ENCODE measurements at regions of chr14 and their contacts with region 1.

Region 1: DNA sequence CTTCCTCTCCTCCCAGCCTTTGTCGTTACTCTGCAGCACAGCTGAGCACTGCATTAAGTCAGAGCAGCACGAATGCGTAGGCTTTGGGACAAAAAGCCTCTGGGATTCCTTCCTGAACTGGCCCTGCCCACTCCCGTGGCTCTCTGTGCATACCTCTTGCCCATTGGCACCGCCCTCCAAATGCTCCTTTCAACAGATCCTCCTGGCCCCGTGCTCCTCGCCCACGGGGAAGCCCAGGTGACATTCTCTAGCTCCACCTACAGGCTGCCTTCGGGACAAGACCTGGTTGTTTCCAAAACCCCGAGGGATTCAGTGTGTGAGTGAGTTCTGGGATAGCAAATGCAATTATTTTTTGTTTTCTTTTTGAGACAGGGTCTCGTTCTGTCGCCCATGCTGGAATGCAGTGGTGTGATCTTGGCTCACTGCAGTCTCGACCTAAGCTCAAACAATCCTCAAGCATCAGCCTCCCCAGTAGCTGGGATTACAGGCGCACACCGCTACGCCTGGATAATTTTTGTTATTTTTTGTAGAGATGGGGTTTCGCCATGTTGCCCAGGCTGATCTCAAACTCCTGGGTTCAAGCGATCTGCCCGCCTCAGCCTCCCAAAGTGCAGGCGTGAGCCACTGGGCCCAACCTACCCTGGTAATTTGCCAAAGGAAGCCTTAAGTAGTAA is 17.9 kb upstream of the TDRD9 start:
- DNase-seq: peak; percentile 56 to 79 (median 64)
- H3K4me3 ChIP-seq: peak overlapping the region; percentile 36
- H3K4me3 Mint-ChIP-seq: peak overlapping the region; percentile 28 to 85 (median 82)
- H3K27ac ChIP-seq: no peak overlapping the region
- H3K27ac Mint-ChIP-seq: peak overlapping the region; percentile 22 to 89 (median 80)
- H3K4me1 ChIP-seq: peaks cover 22% of the 10 kb centered on the region
- H3K4me1 Mint-ChIP-seq: peaks cover 20 to 28% (median 23%) of the 10 kb centered on the region in 3 donors
- H3K27me3 ChIP-seq: no peaks in the 10 kb centered on the region
- H3K27me3 Mint-ChIP-seq: no peaks in the 10 kb centered on the region

Region 2: DNA sequence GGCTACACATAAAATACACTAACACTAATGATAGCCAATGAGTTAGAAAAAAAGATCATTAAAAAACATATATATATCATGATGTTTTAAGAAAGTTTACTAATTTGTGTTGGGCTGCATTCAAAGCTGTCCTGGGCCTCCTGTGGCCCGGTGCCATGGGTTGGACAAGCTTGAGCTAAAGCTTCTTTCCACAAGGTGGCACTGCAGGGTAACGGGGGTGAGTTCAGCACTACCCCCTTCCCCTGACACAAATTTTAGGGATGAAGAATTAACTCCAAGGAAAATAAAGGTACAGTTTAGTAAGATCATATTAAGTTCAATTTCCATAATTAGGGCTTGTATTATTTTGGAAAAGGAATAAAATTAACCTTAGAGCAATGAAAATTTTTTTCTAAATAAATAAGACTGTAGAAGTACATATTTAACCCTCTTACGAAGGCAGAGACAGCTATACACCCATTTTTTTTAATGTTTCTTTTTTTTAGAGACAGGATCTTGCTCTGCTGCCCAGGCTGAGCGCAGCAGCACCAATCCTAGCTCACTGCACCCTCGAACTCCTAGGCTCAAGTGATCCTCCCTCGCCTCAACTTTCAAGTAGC is 101.9 kb before region 1 on chr14:
- CTCF ChIA-PET with region 1: interaction called, 56 read pairs
- POLR2A ChIA-PET with region 1: interaction called, 3 read pairs
- DNase-seq: peak; percentile 37 to 76 (median 52)
- H3K4me3 ChIP-seq: no peak overlapping the region
- H3K4me3 Mint-ChIP-seq: no peak overlapping the region
- H3K27ac ChIP-seq: no peak overlapping the region
- H3K27ac Mint-ChIP-seq: peak overlapping the region in 1 of 8 donors; percentile 57
- H3K4me1 ChIP-seq: no peaks in the 10 kb centered on the region
- H3K4me1 Mint-ChIP-seq: peaks cover 9 to 12% (median 11%) of the 10 kb centered on the region in 3 donors
- H3K27me3 ChIP-seq: no peaks in the 10 kb centered on the region
- H3K27me3 Mint-ChIP-seq: no peaks in the 10 kb centered on the region

Region 3: GRCh38 chr14:103871596-103872480 is 38.6 kb before region 1 on chr14:
- CTCF ChIA-PET with region 1: no interaction called
- POLR2A ChIA-PET with region 1: no interaction called
- DNase-seq: peak; percentile 69 to 82 (median 78)
- H3K4me3 ChIP-seq: peak overlapping the region; percentile 72
- H3K4me3 Mint-ChIP-seq: peak overlapping the region; percentile 83 to 94 (median 88)
- H3K27ac ChIP-seq: no peak overlapping the region
- H3K27ac Mint-ChIP-seq: peak overlapping the region; percentile 76 to 89 (median 86)
- H3K4me1 ChIP-seq: peaks cover 14% of the 10 kb centered on the region
- H3K4me1 Mint-ChIP-seq: peaks cover 12 to 29% (median 17%) of the 10 kb centered on the region in 3 donors
- H3K27me3 ChIP-seq: no peaks in the 10 kb centered on the region
- H3K27me3 Mint-ChIP-seq: no peaks in the 10 kb centered on the region

Region 4: GRCh38 chr14:103899316-103899715 is 11.1 kb before region 1 on chr14:
- CTCF ChIA-PET with region 1: interaction called, 24 read pairs
- POLR2A ChIA-PET with region 1: interaction called, 3 read pairs
- DNase-seq: no peak
- H3K4me3 ChIP-seq: no peak overlapping the region
- H3K4me3 Mint-ChIP-seq: no peak overlapping the region
- H3K27ac ChIP-seq: no peak overlapping the region
- H3K27ac Mint-ChIP-seq: no peak overlapping the region
- H3K4me1 ChIP-seq: no peaks in the 10 kb centered on the region
- H3K4me1 Mint-ChIP-seq: peaks cover 3 to 6% (median 5%) of the 10 kb centered on the region in 3 donors
- H3K27me3 ChIP-seq: no peaks in the 10 kb centered on the region
- H3K27me3 Mint-ChIP-seq: peaks cover 3 to 4% of the 10 kb centered on the region in 2 donors

Region 5: DNA sequence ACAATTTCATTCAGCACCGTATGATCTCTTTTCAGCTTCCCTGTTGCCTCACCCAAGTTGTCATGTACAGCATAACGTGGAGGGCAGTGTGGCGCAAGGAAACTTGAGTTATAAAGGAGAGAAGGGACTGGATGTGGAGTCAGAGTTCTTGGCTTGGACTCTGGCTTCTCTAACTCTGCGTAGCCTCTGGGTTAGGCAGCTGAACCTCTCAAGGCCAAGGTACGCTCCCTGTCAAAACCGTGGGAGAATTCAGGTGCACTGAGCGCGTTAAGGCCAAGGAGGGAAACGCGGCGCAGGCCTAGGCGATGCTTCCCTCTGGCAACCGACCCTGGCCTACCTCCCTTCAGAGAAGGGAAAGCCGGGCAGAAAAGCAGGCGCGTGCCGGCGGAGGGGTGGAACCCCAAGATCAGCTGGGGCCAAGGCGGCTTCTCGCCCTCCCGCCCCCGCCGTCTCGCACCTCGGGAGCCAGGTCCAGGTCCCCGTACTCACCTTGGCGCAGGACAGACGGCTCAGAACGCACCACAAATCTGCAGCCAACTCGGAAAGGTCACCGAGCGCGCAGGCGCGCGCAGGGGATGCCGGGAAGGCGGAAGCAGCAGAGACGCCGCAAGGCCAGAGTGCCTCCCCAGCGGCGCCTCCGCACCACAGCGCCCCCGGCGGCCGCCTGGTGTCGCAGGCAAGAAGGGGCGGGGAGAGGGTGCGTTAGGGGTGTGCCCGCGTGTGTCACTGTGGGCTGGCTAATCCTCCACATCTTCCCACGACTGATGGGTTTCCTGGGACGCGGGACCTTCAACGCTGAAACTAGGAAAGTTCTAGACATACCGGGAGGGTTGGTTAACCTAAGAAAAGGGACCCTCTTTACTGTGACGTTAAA is 10.8 kb after region 1 on chr14:
- CTCF ChIA-PET with region 1: interaction called, 29 read pairs
- POLR2A ChIA-PET with region 1: interaction called, 6 read pairs
- DNase-seq: peak; percentile 93 to 96 (median 95)
- H3K4me3 ChIP-seq: peak overlapping the region; percentile 95
- H3K4me3 Mint-ChIP-seq: peak overlapping the region; percentile 88 to 91 (median 89)
- H3K27ac ChIP-seq: peak overlapping the region; percentile 66
- H3K27ac Mint-ChIP-seq: peak overlapping the region; percentile 64 to 93 (median 87)
- H3K4me1 ChIP-seq: peaks cover 13% of the 10 kb centered on the region
- H3K4me1 Mint-ChIP-seq: peaks cover 13 to 31% (median 26%) of the 10 kb centered on the region in 3 donors
- H3K27me3 ChIP-seq: no peaks in the 10 kb centered on the region
- H3K27me3 Mint-ChIP-seq: peaks cover 5 to 8% of the 10 kb centered on the region in 2 donors

Region 6: DNA sequence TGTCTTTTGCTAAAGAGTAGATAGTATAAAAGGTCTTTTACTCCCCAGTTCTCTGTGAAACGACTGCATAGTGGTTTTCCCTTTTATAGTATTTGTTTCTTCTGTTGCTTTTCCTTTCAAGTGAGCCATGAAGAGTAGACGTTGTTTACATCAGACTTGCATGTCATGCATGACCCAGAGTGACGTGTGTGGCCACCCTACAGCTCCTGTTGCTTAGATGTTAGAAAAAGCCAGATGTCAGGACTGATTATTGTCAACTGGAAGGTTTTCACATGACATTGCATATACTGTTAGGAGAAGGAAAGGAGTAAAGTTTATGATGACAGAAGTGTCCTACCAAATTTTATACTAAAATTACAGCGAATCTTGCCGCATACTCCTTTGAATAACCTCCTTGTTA is 33.3 kb after region 1 on chr14:
- CTCF ChIA-PET with region 1: no interaction called
- POLR2A ChIA-PET with region 1: no interaction called
- DNase-seq: no peak
- H3K4me3 ChIP-seq: no peak overlapping the region
- H3K4me3 Mint-ChIP-seq: no peak overlapping the region
- H3K27ac ChIP-seq: no peak overlapping the region
- H3K27ac Mint-ChIP-seq: no peak overlapping the region
- H3K4me1 ChIP-seq: no peaks in the 10 kb centered on the region
- H3K4me1 Mint-ChIP-seq: no peaks in the 10 kb centered on the region
- H3K27me3 ChIP-seq: peaks cover 5% of the 10 kb centered on the region
- H3K27me3 Mint-ChIP-seq: peaks cover 37 to 61% of the 10 kb centered on the region in 2 donors

Region 7: DNA sequence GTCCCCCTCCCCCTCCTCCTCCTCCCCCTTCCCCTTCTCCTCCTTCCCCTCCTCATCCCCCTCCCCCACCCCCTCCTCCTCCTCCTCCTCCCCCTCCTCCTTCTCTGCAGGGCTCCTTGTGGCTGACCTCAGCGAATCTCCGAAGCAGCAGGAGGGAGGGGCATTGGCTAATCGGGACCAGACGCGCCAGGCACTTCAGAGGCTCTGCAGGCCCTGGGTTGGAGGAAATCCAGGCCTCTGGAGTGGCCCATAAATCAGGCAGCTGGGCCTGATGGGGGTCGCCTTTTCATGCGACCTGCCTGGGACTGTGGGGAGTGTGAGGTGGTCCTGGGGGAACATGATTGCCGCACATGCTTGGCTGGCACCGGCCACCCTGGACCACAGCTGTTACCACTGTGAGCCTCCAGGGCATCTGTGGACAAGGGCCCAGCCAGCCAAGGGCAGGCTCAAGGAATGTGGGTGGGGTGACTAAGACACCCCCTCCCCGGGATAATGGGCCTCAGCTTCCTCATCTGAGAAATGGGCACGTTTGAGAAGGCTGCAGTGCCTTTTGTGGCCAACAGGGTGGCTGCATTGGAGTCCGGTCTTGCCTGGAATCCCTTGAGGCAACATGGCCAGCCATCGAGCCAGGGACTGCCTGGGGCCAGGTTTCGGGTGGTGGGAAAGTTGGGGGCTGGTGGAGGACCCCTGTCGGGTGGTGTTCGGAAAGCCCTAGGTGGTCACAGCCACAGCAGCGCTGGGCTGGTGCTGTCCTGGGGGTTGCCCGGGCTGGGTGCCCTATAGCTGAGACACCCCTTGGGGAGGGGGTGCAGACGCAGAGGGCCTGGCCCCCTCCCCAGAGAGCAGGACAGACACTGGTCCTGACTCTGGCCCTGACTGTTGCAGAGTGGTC is 240.0 kb after region 1 on chr14:
- CTCF ChIA-PET with region 1: no interaction called
- POLR2A ChIA-PET with region 1: no interaction called
- DNase-seq: no peak
- H3K4me3 ChIP-seq: no peak overlapping the region
- H3K4me3 Mint-ChIP-seq: no peak overlapping the region
- H3K27ac ChIP-seq: no peak overlapping the region
- H3K27ac Mint-ChIP-seq: no peak overlapping the region
- H3K4me1 ChIP-seq: no peaks in the 10 kb centered on the region
- H3K4me1 Mint-ChIP-seq: no peaks in the 10 kb centered on the region
- H3K27me3 ChIP-seq: no peaks in the 10 kb centered on the region
- H3K27me3 Mint-ChIP-seq: peaks cover 3 to 16% of the 10 kb centered on the region in 2 donors